Cardiac septum (tissue), 1 donor: ENCODE measurements at regions of chr6 and their contacts with region 1.

Region 1: GRCh38 chr6:108947114-108947854 is 99.1 kb downstream of the ARMC2 start:
- DNase-seq: no peak

Region 2: DNA sequence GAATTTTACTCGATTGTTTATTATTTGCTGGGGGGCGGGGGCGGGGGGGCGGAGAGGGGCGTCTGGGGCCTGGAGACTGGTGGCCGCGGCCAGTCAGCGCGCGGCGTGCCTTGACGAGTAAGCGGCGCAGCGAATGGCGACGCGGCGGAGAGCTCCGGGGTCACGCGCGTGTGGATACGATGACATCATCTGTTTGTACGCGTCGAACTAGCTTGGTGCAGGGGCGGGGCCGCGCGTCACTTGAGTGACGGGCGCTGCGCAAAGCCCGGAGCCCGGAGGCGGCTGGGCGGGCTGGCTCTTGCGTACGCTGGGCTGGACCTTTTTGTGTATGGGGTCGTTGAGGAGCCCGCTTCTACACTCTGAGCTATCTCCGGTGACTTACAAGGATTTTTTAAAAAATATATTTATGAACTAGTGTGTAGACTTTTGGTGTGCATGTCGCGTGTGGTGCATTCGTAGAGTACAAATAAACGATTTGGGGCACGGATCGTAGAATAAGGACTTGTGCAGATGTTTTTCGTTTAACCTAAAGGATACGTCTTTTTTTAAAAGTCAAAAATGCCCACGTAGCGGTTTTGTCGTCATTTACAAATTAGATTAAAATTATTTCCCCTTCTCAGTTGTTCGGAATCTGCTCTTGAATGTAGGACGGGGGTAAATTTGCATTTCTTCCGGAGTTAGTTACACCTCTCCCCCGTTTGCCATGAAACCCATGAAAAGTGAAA is 388.8 kb before region 1 on chr6:
- intact Hi-C with region 1: loop called (anchors 5 kb)
- DNase-seq: peak; percentile 99

Region 3: GRCh38 chr6:108896111-108896661 is 51.1 kb before region 1 on chr6:
- intact Hi-C with region 1: loop called (anchors 5 kb)
- DNase-seq: no peak

Region 4: DNA sequence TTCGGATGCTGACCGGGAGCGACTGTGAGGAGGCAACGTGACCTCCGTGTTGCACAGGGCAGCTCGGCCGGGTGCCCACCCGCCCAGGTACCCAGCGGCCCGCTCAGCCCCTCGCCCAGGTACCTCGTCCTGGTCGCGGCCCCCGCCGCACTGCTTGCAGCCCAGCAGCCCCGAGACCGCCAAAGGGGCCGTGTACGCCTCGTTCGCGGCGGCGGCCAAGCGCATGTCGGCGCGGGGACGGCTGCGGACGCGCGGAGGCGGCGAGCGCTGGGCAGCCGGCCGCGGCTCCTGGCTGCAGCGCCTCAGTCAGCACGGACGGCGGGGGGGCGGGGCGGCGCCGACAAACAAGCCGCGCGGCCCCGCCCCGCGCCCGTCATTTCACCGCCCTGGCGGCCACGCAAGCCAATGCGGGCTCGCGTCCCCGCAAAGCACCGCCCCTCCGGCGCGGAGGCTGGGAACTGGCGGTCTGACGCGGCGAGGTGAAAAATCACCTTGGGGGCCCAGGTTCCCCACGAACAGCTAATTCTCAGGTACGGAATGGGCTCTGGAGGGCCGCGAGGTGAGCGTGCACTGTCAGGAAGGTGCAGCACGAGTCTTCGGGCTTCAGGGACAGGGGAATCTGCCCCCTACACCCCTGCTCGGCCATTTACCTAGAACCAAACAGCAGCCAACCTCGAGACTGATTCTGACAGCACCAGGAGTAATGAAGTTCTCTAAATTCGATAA is 62.1 kb after region 1 on chr6:
- intact Hi-C with region 1: loop called (anchors 2 kb)
- DNase-seq: peak; percentile 98

Region 5: DNA sequence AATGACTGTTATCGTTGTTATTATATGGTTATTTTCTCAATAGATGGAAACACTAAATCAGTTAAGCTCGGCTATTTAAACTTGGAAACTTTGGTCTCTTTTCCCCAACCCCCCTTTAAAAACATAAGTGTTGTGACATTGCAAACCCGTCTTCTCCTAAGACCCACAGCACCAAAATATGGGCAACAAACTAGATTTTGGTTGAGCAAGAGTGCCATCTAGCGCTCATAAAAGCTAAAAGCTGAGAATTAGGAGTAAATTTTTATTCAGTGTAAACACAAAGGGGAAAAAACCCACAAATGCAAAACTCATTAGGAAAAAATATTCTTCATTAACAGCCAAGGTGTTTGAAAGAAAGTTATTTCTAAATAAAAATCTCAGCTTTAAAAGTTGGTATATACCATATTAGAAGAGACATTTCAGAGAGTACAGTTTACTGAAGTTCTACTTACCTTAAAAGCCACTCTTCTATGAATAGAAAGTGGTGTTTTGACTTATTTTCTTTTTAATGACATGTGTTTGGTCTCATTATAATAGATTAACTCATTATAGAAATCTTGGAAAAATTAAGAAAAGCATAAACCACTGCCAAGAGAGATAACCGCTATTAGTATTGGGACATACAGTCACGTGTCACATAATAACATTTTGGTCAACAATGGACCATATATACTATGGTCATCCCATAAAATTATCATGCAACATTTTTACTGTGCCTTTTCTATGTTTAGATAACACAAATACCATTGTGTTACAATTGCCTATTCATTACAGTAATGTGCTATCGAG is 126.3 kb after region 1 on chr6:
- intact Hi-C with region 1: loop called (anchors 5 kb)
- DNase-seq: no peak

Region 6: DNA sequence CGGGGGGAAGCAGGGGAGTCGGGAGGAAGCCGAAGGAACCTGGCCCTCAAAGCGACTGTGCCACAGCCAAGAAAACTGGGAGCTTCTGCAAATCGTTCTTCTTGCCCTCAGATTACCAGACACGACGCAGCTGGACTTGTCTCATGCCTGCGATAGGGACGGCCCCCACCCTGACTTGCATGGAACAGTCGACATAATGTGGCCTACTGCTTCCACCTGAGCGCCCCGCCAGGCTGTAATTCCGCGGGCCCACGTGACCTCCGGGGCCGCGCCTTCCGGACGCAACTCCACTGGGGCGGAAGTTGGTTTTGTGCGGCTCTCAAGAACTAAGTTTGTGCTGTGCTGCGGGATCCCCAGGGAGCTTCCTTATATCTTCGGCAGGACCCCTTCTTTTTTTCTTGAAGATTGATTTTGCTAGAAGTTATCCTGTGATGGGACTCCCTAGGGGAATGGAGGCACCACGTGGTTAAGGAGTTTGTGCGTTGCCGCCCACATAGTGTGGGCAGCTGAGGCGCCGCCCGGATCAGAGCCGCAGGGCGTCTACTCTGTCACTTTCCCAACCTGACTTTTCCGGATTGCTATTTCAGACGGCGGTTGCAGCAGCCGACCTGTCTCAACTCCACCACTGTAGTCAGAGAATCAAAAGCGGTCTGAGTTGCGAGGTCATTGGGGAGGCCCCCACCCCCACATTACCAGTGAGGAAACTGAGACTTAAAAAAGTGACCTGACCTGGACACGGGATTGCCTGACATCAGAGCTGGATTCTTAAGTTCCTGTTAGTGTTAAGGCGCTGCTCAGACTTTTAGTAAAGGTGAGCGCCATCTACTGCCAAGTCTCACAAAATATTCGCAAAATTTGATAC is 435.5 kb after region 1 on chr6:
- intact Hi-C with region 1: loop called (anchors 10 kb)
- DNase-seq: peak; percentile 97

Region 7: DNA sequence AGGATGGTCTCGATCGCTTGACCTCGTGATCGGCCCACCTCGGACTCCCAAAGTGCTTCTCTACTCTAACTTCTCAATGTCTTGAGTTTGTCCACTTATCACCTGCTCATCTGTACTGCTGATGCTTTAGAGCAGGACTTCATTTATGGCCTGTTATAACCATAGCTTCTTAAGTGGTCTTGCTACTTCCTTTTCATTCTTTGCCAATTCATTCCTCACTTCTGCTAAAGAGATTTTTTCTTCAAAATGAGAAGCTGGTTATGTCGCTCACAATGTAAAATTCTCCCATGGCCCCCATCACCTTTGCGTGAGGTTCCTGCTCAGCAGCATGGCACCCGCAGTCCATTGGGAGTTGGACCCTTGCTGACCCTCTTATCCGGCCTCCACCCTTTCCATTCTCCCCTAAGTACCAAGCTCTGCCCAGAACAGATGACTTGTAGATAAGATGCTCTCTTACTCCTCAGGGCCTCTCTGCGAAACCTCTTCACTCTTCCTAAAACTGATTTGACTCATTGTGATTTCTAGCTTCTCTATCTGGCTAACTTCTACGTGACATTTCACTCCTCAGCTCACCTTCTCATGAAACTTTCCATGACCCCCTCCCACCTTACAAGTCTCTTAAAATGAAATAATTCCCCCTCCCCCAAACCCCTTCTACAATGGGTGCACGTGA is 448.9 kb after region 1 on chr6:
- intact Hi-C with region 1: no loop called
- DNase-seq: no peak